ENCODE measurements at regions of chr14 and their contacts with region 1.

Region 1: DNA sequence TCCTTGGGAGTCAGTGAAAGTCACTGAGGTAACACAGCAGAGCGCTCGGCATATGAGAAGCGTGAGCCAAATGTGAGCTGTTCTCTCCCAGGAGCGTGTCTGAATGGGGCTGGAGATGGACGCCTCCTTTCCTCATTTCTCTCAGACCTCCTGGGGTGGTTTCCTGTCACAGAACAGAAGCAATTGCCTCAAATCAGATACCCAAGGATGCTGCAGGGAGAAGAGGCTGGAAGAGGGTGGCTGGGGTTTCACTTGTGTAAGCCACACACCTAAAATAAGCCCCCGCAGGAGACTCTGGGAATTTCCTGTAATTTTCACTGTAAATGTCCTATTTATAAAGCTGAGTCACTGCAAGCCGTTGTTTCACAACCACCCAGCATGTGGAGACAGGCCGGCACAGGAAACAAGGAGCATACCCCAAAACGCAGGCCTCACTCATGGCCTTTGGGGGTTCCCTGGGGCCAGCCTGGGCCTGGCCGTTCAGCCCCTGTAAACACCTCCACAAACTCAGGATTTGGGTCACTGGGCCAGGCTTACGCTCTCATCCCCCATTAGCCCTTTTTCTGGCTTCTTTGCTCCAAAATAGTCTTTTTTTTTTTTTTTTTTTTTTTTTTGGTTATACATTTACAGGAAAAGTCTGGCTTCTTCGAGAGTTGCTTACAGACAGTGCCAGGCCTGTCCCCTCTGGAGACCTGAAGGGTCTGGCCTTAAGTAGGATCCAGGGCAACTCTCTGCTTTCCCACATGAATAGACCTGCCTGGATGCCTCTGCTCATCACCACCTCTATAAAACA is 55.3 kb downstream of the VCPKMT start:
- DNase-seq: peak in 6 of 14 experiments; percentile 17 to 79 (median 57)
- ATAC-seq: no peak
- H3K4me3 ChIP-seq: peak overlapping the region; percentile 48
- H3K4me3 Mint-ChIP-seq: peak overlapping the region; percentile 70
- H3K27ac ChIP-seq: peak overlapping the region; percentile 89 to 94
- H3K27ac Mint-ChIP-seq: peak overlapping the region; percentile 91
- H3K4me1 ChIP-seq: peaks cover 73% of the 10 kb centered on the region
- H3K4me1 Mint-ChIP-seq: peaks cover 73% of the 10 kb centered on the region
- H3K27me3 ChIP-seq: no peaks in the 10 kb centered on the region
- H3K27me3 Mint-ChIP-seq: no peaks in the 10 kb centered on the region
- CTCF ChIP-seq: no peak

Region 2: DNA sequence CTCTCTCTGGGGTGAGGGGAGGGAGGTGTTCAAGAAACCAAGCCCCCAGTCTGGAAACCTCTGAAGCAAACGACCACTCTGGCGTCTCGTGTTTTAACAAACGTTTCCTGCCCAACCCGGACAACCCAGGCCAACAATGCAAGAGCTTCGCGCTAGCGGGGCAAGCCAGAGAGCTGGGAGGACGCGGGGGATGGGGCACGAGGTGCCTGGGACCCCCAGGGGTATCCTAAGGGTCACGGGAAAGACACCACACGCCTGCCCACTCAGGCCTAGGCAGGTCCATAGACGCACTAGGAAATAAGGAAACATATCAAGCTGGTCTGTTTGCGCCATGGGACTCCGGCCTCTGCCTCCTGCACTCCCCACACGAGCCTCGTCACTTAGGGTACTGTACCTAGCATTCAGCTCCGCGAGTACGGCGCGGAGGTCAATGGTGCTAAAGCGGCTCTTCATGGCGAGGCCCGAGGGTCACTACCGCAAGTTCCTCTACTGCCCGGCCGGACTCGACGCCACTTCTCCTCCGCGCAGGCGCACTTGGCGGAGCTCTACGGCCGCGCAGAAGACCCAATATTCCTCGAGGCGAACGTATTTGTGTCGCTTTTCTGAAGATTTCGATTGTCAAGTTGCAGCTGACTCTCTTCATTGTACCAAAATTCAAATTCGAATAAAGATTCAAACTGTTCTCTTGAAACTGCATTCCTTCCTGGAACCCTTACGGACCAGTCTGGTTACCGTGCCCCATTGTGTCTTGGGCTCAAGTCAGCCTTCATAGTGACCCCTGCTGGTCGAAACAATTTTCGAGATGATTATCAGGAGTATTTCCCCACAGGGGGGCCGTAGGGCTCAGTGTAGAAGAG is 208.5 kb before region 1 on chr14 and contains the start of gene NEMF:
- CTCF ChIA-PET with region 1: interaction called, 7 read pairs
- POLR2A ChIA-PET with region 1: interaction called, 28 read pairs
- intact Hi-C with region 1: no loop called
- DNase-seq: peak; percentile 67 to 91 (median 72)
- ATAC-seq: peak; percentile 75
- H3K4me3 ChIP-seq: peak within 1 kb of the TSS; percentile 97
- H3K4me3 Mint-ChIP-seq: peak within 1 kb of the TSS; percentile 99
- H3K27ac ChIP-seq: peak within 1 kb of the TSS; percentile 64 to 80
- H3K27ac Mint-ChIP-seq: peak within 1 kb of the TSS; percentile 91
- H3K4me1 ChIP-seq: peaks cover 17% of the 10 kb centered on the region
- H3K4me1 Mint-ChIP-seq: peaks cover 46% of the 10 kb centered on the region
- H3K27me3 ChIP-seq: no peaks in the 10 kb centered on the region
- H3K27me3 Mint-ChIP-seq: no peaks in the 10 kb centered on the region
- CTCF ChIP-seq: peak; percentile 89
- total RNA-seq, gene NEMF: 96.0 to 97.7 TPM

Region 3: DNA sequence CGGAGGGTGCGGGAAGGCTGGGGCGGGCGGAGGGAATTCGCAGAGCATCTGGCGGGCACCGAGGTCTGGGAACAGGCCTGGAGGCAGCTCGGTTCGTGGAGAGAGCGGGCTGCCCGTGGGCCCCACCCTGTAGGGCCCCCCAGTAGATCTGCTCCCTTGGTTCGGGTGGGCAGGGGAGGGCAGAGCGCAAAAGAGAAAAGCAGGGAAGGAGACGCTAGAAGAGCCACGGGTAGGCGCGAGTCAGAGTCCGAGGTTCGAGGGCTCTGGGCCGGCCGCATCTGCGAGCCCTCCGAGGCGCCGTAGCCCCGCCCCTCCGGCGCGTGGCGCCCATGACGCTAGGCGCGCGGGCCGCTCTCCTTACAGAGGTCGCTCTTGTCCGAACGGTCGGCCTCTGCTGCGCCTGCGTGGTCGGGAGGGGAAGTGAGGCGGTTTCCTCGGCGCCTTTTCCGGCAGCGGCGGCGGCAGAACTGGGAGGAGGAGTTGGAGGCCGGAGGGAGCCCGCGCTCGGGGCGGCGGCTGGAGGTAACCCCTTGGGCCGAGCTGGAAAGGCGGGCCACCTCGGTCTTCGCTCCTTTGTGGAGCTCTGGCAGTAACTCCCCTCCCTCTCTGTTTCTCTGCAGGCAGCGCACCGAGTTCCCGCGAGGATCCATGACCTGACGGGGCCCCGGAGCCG is 168.3 kb before region 1 on chr14 and contains the start of gene ARF6:
- CTCF ChIA-PET with region 1: interaction called, 6 read pairs
- POLR2A ChIA-PET with region 1: interaction called, 40 read pairs
- intact Hi-C with region 1: loop called (anchors 1 to 5 kb)
- DNase-seq: peak; percentile 86 to 98 (median 96)
- ATAC-seq: peak; percentile 69
- H3K4me3 ChIP-seq: peak within 1 kb of the TSS; percentile 96
- H3K4me3 Mint-ChIP-seq: peak within 1 kb of the TSS; percentile 98
- H3K27ac ChIP-seq: peak within 1 kb of the TSS; percentile 93 to 99
- H3K27ac Mint-ChIP-seq: peak within 1 kb of the TSS; percentile 96
- H3K4me1 ChIP-seq: peaks cover 19% of the 10 kb centered on the region
- H3K4me1 Mint-ChIP-seq: peaks cover 43% of the 10 kb centered on the region
- H3K27me3 ChIP-seq: no peaks in the 10 kb centered on the region
- H3K27me3 Mint-ChIP-seq: no peaks in the 10 kb centered on the region
- CTCF ChIP-seq: no peak
- total RNA-seq, gene ARF6: 67.2 to 69.7 TPM

Region 4: GRCh38 chr14:49930720-49931119 is 130.3 kb before region 1 on chr14:
- CTCF ChIA-PET with region 1: no interaction called
- POLR2A ChIA-PET with region 1: no interaction called
- intact Hi-C with region 1: no loop called
- DNase-seq: no peak
- ATAC-seq: no peak
- H3K4me3 ChIP-seq: no peak overlapping the region
- H3K4me3 Mint-ChIP-seq: no peak overlapping the region
- H3K27ac ChIP-seq: no peak overlapping the region
- H3K27ac Mint-ChIP-seq: no peak overlapping the region
- H3K4me1 ChIP-seq: no peaks in the 10 kb centered on the region
- H3K4me1 Mint-ChIP-seq: no peaks in the 10 kb centered on the region
- H3K27me3 ChIP-seq: no peaks in the 10 kb centered on the region
- H3K27me3 Mint-ChIP-seq: no peaks in the 10 kb centered on the region
- CTCF ChIP-seq: no peak

Region 5: DNA sequence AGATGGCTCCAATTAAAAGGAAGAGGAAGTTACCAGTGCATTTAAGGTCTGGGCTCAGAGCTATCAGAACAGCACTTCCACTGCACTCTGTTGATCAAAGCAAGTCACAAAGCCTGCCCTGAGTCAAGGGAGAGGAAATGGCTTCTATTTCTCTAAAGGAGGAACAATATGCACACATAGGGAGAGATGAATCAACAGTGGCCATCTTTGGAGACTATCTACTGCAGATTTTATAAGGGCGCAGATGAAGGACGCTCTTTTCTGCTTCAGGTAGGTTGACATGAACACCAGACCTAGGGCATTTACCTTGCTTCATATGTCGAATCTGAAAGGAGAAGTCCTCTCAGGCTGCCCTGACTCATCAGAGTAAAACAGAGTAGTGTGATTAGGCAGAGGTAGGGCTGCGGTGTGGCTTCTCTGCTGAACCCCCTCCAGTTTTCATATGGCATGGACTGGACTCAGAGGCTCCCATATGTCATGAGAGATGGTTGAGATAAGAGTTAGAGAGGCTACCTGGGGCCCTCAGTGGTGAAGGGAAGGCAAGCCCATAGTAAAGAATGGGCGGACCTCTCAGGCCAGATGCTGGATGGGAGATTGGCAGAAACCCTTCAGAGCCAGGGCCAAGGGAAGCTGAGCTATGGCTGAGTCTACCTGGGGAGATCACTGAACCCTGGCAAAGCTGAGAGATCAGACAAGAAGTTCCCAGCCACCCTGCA is 83.8 kb before region 1 on chr14:
- CTCF ChIA-PET with region 1: interaction called, 7 read pairs
- POLR2A ChIA-PET with region 1: interaction called, 46 read pairs
- intact Hi-C with region 1: no loop called
- DNase-seq: peak in 9 of 14 experiments; percentile 12 to 83 (median 40)
- ATAC-seq: peak; percentile 86
- H3K4me3 ChIP-seq: peak overlapping the region; percentile 41
- H3K4me3 Mint-ChIP-seq: peak overlapping the region; percentile 74
- H3K27ac ChIP-seq: peak overlapping the region; percentile 67 to 85
- H3K27ac Mint-ChIP-seq: peak overlapping the region; percentile 90
- H3K4me1 ChIP-seq: peaks cover 94% of the 10 kb centered on the region
- H3K4me1 Mint-ChIP-seq: peaks cover 83% of the 10 kb centered on the region
- H3K27me3 ChIP-seq: no peaks in the 10 kb centered on the region
- H3K27me3 Mint-ChIP-seq: no peaks in the 10 kb centered on the region
- CTCF ChIP-seq: no peak

Region 6: GRCh38 chr14:50085570-50086320 is 24.7 kb after region 1 on chr14:
- CTCF ChIA-PET with region 1: interaction called, 26 read pairs
- POLR2A ChIA-PET with region 1: interaction called, 83 read pairs
- intact Hi-C with region 1: loop called in 1 of 2 experiments (anchors 1 kb)
- DNase-seq: peak in 4 of 14 experiments; percentile 28 to 65 (median 55)
- ATAC-seq: no peak
- H3K4me3 ChIP-seq: no peak overlapping the region
- H3K4me3 Mint-ChIP-seq: peak overlapping the region; percentile 65
- H3K27ac ChIP-seq: peak overlapping the region; percentile 96 to 97
- H3K27ac Mint-ChIP-seq: peak overlapping the region; percentile 93
- H3K4me1 ChIP-seq: peaks cover 80% of the 10 kb centered on the region
- H3K4me1 Mint-ChIP-seq: peaks cover 89% of the 10 kb centered on the region
- H3K27me3 ChIP-seq: no peaks in the 10 kb centered on the region
- H3K27me3 Mint-ChIP-seq: no peaks in the 10 kb centered on the region
- CTCF ChIP-seq: no peak

Measured in CD4-positive, alpha-beta T cell (primary cell).